Lower leg skin (tissue), 4 donors: ENCODE measurements at regions of chr18 and their contacts with region 1.

Region 1: DNA sequence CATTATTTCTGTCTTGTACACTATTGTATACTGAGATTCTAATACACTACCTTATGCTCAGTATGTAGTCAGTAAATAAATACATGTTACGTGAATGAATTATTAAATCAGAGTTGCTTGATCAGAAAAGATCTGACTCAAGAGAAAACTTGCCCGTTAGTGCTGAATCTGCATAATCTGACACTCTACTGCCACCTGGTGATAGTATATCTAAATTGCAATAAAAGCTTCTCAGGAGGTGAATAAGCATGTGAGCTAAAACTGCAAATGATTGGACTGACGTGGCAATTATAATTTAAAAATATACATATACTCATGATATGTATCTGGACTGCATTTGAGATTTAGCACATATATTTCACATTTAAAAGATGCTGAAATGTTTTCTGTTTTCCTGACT is 70.4 kb downstream of the KIAA1328 start:
- DNase-seq: no peak
- H3K4me3 ChIP-seq: no peak overlapping the region
- CTCF ChIP-seq: no peak
- POLR2A ChIP-seq: no peak

Region 2: GRCh38 chr18:36534154-36534688 is 365.1 kb before region 1 on chr18:
- intact Hi-C with region 1: no loop called
- DNase-seq: no peak
- H3K4me3 ChIP-seq: no peak overlapping the region
- CTCF ChIP-seq: no peak
- POLR2A ChIP-seq: no peak

Region 3: GRCh38 chr18:36929601-36930000 is 30.3 kb after region 1 on chr18:
- intact Hi-C with region 1: loop called (anchors 1 kb)
- DNase-seq: no peak
- H3K4me3 ChIP-seq: no peak overlapping the region
- CTCF ChIP-seq: no peak
- POLR2A ChIP-seq: no peak

Region 4: GRCh38 chr18:37019157-37019827 is 120.0 kb after region 1 on chr18:
- intact Hi-C with region 1: no loop called
- DNase-seq: no peak
- H3K4me3 ChIP-seq: no peak overlapping the region
- CTCF ChIP-seq: no peak
- POLR2A ChIP-seq: no peak